ENCODE measurements at regions of chr7 and their contacts with region 1.

Region 1: GRCh38 chr7:106659963-106660861 is 746 bp downstream of the CCDC71L start:
- DNase-seq: peak; percentile 92
- ATAC-seq: peak; percentile 82 to 89
- H3K4me3 ChIP-seq: peak overlapping the region; percentile 77
- H3K27ac ChIP-seq: peak overlapping the region; percentile 97
- H3K4me1 ChIP-seq: peaks cover 28% of the 10 kb centered on the region
- H3K27me3 ChIP-seq: no peaks in the 10 kb centered on the region
- CTCF ChIP-seq: peak; percentile 87

Region 2: GRCh38 chr7:106736508-106737201 is 76.4 kb after region 1 on chr7:
- intact Hi-C with region 1: loop called (anchors 5 kb)
- DNase-seq: no peak
- ATAC-seq: peak; percentile 91 to 95
- H3K4me3 ChIP-seq: no peak overlapping the region
- H3K27ac ChIP-seq: no peak overlapping the region
- H3K4me1 ChIP-seq: peaks cover 5% of the 10 kb centered on the region
- H3K27me3 ChIP-seq: no peaks in the 10 kb centered on the region
- CTCF ChIP-seq: peak; percentile 72

Measured in lower lobe of right lung (tissue), 2 donors.